ENCODE measurements at regions of chr1 and their contacts with region 1.

Region 1: GRCh38 chr1:55140546-55140983 is 74.6 kb downstream of the USP24 start:
- DNase-seq: peak; percentile 76 to 89 (median 86)
- H3K4me3 ChIP-seq: no peak overlapping the region
- H3K27ac ChIP-seq: no peak overlapping the region
- H3K4me1 ChIP-seq: peaks cover 0 to 14% of the 10 kb centered on the region in 2 donors
- H3K27me3 ChIP-seq: no peaks in the 10 kb centered on the region
- CTCF ChIP-seq: peak; percentile 72 to 92 (median 82)
- POLR2A ChIP-seq: no peak

Region 2: GRCh38 chr1:55204997-55205396 is 64.4 kb after region 1 on chr1:
- intact Hi-C with region 1: loop called in 1 of 2 experiments (anchors 5 kb)
- DNase-seq: peak in 5 of 7 donors; percentile 34 to 36 (median 36)
- H3K4me3 ChIP-seq: no peak overlapping the region
- H3K27ac ChIP-seq: peak overlapping the region in 3 of 5 donors; percentile 20 to 38 (median 31)
- H3K4me1 ChIP-seq: peaks cover 33 to 61% of the 10 kb centered on the region in 2 donors
- H3K27me3 ChIP-seq: no peaks in the 10 kb centered on the region
- CTCF ChIP-seq: no peak
- POLR2A ChIP-seq: no peak

Region 3: DNA sequence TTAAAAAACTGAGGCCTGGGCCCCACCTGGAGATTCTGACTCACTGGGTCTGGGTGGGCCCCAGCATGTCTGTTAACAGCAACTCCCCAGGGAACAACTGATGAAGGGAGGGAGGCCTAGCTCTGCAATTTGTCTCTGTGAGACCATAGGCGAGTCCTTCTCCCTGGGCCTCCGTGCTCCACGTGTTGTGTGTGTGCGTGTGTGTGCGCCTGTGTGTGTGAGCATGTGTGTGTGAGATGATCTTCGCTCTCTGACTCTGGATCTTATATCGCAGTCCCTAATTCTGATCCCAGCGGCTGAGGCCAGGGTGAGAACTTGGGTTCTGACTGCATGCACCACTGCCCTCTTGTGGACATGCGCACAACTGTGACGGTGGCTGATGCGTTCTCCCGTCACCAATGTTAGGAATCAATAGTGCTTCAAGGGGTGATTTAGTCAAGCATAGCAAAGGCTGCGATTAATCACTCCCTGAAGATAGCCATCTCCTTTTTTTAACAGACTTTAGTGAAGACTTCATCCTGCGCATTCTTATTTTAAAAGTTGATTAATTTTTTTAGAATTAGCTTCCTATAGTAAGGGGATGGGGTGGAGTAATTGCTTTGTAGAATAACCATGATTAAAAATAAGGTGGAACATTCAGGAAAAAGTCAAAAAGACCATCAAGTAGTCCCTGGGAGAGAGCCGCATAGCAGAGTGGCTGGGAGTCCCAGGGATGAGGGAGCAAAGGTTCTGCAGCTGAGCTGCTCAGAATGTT is 137.0 kb after region 1 on chr1:
- intact Hi-C with region 1: loop called (anchors 2 kb)
- DNase-seq: peak; percentile 75 to 94 (median 81)
- H3K4me3 ChIP-seq: no peak overlapping the region
- H3K27ac ChIP-seq: no peak overlapping the region
- H3K4me1 ChIP-seq: no peaks in the 10 kb centered on the region
- H3K27me3 ChIP-seq: peaks cover 1% of the 10 kb centered on the region
- CTCF ChIP-seq: peak; percentile 57 to 96 (median 88)
- POLR2A ChIP-seq: no peak

Region 4: DNA sequence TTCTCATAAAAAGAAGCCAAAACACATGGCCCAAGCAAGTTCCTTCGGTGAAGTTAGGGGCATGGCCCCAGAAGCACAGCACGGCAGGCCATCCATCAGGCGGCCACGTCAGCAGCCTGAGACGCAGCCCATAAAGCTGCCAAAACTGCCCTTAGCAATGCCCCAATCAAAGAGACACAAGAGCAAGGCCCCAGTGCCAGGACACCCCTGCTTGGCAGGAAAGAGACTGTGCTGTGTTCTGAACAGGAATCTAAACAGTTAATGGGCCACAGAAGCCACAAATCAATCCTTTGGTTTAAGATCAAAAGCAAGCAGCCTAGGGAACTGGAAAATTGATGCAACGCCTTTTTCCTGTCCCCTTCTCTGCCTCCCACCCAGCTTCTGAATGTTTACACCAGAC is 571.6 kb after region 1 on chr1:
- intact Hi-C with region 1: no loop called
- DNase-seq: no peak
- H3K4me3 ChIP-seq: no peak overlapping the region
- H3K27ac ChIP-seq: no peak overlapping the region
- H3K4me1 ChIP-seq: peaks cover 0 to 4% of the 10 kb centered on the region in 2 donors
- H3K27me3 ChIP-seq: no peaks in the 10 kb centered on the region
- CTCF ChIP-seq: no peak
- POLR2A ChIP-seq: no peak

Measured in adrenal gland (tissue), 19 donors.